Calu3 (cell line): ENCODE measurements at regions of chr5 and their contacts with region 1.

Region 1: DNA sequence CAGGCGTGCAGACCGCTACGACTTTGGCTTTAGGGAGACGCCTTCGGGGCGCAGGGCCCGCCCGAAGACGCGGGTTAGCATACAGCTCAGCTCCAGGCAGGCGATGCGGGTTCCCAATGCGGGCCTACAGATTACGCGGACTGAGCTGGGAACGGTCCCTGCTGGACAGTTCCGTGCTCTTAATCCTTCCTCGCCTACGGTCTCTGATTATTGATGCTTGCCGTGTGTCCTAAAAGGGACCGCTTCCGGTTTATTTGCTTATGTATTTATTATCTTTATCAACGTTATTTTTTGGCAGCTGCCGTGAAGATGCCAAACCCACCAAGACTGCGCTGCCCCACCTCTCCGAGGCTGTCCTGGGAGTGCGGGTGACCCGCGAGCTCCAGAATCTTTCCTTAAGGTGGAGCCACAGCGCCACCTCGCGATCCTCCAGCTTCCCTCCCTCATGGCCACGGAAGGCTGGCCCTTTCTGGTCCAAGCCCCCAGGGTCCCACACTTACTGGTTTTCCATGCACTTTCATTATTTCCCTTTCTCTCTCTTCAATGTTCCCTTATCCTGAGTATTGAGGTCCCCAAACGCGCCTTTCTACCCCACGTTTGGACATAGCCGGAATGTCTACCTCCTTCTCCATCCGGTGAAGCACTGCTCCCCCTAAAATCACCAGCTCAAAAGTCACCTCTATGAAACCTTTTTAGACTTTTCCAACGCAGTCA is 7.0 kb upstream of the EBF1 start:
- DNase-seq: peak; percentile 85
- H3K4me3 Mint-ChIP-seq: peak overlapping the region; percentile 10
- H3K27ac Mint-ChIP-seq: no peak overlapping the region
- H3K4me1 Mint-ChIP-seq: peaks cover 17% of the 10 kb centered on the region
- H3K27me3 Mint-ChIP-seq: peaks cover 94% of the 10 kb centered on the region
- CTCF ChIP-seq: peak; percentile 98

Region 2: DNA sequence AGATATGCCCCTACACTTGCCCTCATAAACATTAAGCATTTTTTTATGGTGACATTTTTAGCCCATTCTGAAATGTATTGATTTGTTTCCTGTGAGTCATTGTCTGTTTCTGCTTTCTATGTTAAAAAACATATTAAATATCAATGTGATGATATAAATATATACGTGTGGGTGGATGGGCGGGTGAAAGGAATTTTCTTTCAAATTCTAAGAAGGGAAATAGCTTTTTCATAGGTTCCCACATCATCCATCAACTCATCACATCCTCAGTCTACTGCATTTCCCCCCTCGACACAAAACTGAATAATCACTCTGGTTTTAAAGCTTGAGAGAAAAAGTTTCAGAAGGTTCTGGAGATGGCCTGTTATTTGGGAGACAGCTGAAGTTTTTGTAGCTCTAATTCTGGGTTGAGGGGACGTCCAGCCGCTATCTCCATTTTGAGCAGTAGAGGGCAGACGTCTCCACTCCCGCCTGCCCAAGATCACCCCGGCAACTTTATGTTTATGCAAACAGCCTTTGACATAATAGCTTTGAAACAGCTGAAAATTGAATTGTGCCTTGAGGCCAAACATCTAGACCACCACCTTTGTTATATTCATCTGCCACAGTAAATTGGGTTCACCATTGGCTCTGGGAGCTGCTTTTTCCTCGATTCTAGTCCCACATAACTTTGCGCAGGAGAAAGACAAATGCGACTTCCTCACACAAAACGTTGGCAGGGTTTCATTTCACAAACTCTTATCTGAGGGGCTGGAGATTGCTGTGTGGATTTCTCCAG is 1031.5 kb before region 1 on chr5:
- CTCF ChIA-PET with region 1: interaction called, 11 read pairs
- intact Hi-C with region 1: no loop called
- DNase-seq: peak; percentile 74
- H3K4me3 Mint-ChIP-seq: peak overlapping the region; percentile 43
- H3K27ac Mint-ChIP-seq: peak overlapping the region; percentile 55
- H3K4me1 Mint-ChIP-seq: peaks cover 8% of the 10 kb centered on the region
- H3K27me3 Mint-ChIP-seq: peaks cover 40% of the 10 kb centered on the region
- CTCF ChIP-seq: peak; percentile 70

Region 3: DNA sequence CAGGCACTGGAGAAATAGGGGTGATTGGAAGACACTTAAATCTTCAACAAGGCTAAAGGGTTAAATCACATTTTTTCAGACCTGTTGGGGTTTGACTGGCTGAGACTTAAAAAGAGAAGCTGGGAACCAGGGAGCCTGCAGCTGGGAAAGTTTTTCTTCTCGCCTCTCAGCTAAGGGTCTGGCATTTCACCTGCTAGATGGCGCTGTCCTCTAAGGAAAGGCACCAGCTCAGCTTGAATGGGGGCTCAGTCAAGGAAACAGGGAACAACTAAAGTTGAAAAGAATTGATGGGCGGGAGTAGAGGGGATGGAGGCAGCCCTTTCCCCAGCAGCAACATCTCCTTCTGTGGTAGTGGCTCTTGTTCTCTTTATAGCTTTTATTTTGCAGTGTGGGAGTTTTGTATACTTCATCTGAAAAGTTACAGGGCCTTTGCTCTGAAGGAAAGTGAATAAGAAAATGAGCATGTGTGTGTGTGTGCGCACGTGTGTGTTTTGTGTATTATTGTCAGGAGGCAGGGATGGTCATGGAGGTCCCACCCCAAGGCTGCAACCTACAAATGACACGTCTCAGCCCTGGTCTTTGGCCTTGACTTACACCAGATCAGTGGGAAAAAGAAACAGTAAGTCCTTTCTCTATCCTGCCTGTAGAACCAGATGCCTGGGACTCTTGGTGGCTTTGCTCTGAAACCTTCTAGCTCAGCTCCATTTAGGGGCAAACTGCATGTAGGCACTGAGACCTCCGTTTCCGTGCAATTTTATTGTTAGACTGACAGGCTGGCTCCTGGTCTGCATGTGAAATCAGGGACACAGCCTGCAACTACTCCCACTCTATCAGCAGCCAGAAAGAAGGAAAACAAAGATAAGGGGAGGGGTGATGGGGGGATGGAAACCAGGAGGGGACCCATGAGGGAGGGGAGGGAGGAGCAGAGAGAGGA is 931.5 kb before region 1 on chr5:
- CTCF ChIA-PET with region 1: interaction called, 22 read pairs
- intact Hi-C with region 1: loop called (anchors 2 kb)
- DNase-seq: peak; percentile 71
- H3K4me3 Mint-ChIP-seq: no peak overlapping the region
- H3K27ac Mint-ChIP-seq: no peak overlapping the region
- H3K4me1 Mint-ChIP-seq: peaks cover 5% of the 10 kb centered on the region
- H3K27me3 Mint-ChIP-seq: peaks cover 37% of the 10 kb centered on the region
- CTCF ChIP-seq: peak; percentile 68

Region 4: GRCh38 chr5:158770506-158770905 is 336.2 kb before region 1 on chr5:
- CTCF ChIA-PET with region 1: interaction called, 4 read pairs
- intact Hi-C with region 1: loop called (anchors 5 kb)
- DNase-seq: peak; percentile 30
- H3K4me3 Mint-ChIP-seq: no peak overlapping the region
- H3K27ac Mint-ChIP-seq: no peak overlapping the region
- H3K4me1 Mint-ChIP-seq: no peaks in the 10 kb centered on the region
- H3K27me3 Mint-ChIP-seq: peaks cover 71% of the 10 kb centered on the region
- CTCF ChIP-seq: peak; percentile 19

Region 5: GRCh38 chr5:158880483-158881001 is 226.2 kb before region 1 on chr5:
- CTCF ChIA-PET with region 1: interaction called, 4 read pairs
- intact Hi-C with region 1: loop called (anchors 1 kb)
- DNase-seq: no peak
- H3K4me3 Mint-ChIP-seq: no peak overlapping the region
- H3K27ac Mint-ChIP-seq: no peak overlapping the region
- H3K4me1 Mint-ChIP-seq: peaks cover 9% of the 10 kb centered on the region
- H3K27me3 Mint-ChIP-seq: peaks cover 65% of the 10 kb centered on the region
- CTCF ChIP-seq: no peak

Region 6: GRCh38 chr5:158943057-158943456 is 163.7 kb before region 1 on chr5:
- CTCF ChIA-PET with region 1: no interaction called
- intact Hi-C with region 1: loop called (anchors 10 kb)
- DNase-seq: peak; percentile 24
- H3K4me3 Mint-ChIP-seq: no peak overlapping the region
- H3K27ac Mint-ChIP-seq: no peak overlapping the region
- H3K4me1 Mint-ChIP-seq: peaks cover 8% of the 10 kb centered on the region
- H3K27me3 Mint-ChIP-seq: peaks cover 63% of the 10 kb centered on the region
- CTCF ChIP-seq: no peak

Region 7: GRCh38 chr5:159240301-159240870 is 133.7 kb after region 1 on chr5:
- CTCF ChIA-PET with region 1: no interaction called
- intact Hi-C with region 1: no loop called
- DNase-seq: no peak
- H3K4me3 Mint-ChIP-seq: no peak overlapping the region
- H3K27ac Mint-ChIP-seq: peak overlapping the region; percentile 25
- H3K4me1 Mint-ChIP-seq: peaks cover 12% of the 10 kb centered on the region
- H3K27me3 Mint-ChIP-seq: no peaks in the 10 kb centered on the region
- CTCF ChIP-seq: no peak